ENCODE measurements at regions of chr3 and their contacts with region 1.

Region 1: DNA sequence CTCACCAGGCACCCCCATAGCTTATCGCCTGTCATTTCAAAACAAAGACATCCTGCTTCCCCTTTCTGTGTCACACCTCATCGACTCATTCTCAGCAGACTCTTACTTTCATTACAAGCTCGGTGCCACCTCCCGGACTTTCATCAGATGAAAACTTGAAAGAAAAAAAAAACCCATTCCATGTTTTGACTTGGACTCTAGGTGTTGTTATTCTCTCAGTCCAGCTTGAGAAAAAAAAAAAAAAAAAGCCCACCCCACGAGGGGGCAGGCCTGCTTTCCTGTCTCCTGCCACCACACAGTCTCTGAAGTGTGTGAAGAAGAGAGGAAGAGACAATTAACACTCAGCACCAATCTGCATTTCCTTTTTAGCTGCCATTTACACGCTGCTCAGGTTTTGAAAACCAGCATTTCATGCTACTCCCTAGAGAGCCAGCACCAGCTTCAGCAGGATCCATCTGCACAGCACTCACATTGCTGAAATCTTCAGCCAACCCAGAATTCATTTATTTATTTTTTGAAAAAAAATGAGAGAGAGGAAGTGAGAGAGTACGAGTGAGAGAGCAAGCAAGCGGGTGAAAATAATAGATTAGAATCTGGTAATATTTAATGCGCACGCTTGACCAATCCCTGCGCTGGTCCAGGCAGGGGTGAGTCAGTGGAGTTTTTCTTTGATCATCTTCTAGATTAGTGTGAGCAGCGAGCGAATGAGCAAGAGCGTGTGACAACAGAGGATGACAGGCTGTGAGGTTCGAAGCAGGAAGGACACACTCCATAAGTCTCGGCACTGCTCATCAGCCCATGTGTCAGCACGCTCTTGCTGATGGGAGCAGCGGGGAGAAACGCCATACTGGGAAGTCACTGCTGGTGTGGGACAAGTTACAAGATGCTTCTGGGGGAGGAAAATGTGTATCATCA is 23.5 kb downstream of the ZNF80 start:
- DNase-seq: peak; percentile 88
- ATAC-seq: peak; percentile 68
- H3K4me3 Mint-ChIP-seq: no peak overlapping the region
- H3K27ac Mint-ChIP-seq: no peak overlapping the region
- H3K4me1 Mint-ChIP-seq: peaks cover 21% of the 10 kb centered on the region
- H3K27me3 Mint-ChIP-seq: no peaks in the 10 kb centered on the region
- CTCF ChIP-seq: no peak

Region 2: DNA sequence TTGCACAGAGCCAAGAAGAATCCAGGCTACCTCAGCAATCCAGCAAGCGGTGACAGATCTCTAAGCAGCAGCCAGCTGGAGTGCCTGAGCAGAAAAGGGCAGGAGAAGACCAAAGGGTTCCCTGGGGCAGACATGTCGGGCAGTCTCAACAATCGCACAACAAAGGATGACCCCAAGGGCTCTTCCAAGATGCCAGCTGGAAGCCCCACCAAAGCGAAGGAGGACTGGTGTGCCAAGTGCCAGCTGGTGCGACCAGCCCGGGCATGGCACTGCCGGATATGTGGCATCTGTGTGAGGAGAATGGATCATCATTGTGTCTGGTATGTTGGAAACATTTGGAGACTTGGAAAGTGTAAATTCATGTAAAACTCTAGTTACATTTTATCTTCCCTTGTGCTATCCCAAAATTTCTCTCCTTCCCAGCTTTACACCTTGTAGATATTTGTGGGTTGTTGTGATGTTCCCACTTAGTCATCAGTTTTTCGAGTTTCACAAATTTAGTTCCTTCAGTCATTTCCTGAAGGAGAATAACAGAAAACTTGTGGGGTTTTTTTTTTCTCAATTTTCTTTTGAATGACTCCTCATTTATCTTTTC is 259.7 kb before region 1 on chr3:
- CTCF ChIA-PET with region 1: no interaction called
- POLR2A ChIA-PET with region 1: no interaction called
- intact Hi-C with region 1: no loop called
- DNase-seq: no peak
- ATAC-seq: no peak
- H3K4me3 Mint-ChIP-seq: no peak overlapping the region
- H3K27ac Mint-ChIP-seq: no peak overlapping the region
- H3K4me1 Mint-ChIP-seq: peaks cover 13% of the 10 kb centered on the region
- H3K27me3 Mint-ChIP-seq: peaks cover 4% of the 10 kb centered on the region
- CTCF ChIP-seq: no peak

Region 3: GRCh38 chr3:114152519-114153151 is 61.2 kb before region 1 on chr3:
- CTCF ChIA-PET with region 1: interaction called, 10 read pairs
- POLR2A ChIA-PET with region 1: interaction called, 4 read pairs
- intact Hi-C with region 1: loop called (anchors 5 kb)
- DNase-seq: peak; percentile 92
- ATAC-seq: peak; percentile 99
- H3K4me3 Mint-ChIP-seq: peak overlapping the region; percentile 22
- H3K27ac Mint-ChIP-seq: no peak overlapping the region
- H3K4me1 Mint-ChIP-seq: peaks cover 13% of the 10 kb centered on the region
- H3K27me3 Mint-ChIP-seq: no peaks in the 10 kb centered on the region
- CTCF ChIP-seq: peak; percentile 95

Region 4: DNA sequence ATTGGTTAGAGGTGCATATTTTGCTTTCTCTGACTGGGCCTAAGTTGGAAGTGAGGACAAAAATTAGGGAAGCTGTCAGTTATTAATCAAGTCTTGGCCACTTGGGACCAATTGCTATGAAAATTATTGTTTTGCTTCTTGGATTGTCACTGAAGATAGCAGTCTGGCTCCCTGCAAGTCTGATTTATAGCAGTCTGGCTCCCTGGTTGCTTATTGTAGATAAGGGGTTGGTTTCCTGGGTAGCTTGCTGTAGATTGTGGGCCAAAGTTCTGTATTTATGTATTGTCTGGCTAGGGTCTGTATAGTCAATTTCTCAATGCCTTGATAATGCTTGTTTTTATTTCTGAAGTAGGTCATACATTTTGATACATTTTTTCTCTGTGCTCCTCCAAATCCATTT is 21.7 kb before region 1 on chr3:
- CTCF ChIA-PET with region 1: no interaction called
- POLR2A ChIA-PET with region 1: no interaction called
- intact Hi-C with region 1: no loop called
- DNase-seq: no peak
- ATAC-seq: no peak
- H3K4me3 Mint-ChIP-seq: no peak overlapping the region
- H3K27ac Mint-ChIP-seq: no peak overlapping the region
- H3K4me1 Mint-ChIP-seq: no peaks in the 10 kb centered on the region
- H3K27me3 Mint-ChIP-seq: no peaks in the 10 kb centered on the region
- CTCF ChIP-seq: no peak

Region 5: DNA sequence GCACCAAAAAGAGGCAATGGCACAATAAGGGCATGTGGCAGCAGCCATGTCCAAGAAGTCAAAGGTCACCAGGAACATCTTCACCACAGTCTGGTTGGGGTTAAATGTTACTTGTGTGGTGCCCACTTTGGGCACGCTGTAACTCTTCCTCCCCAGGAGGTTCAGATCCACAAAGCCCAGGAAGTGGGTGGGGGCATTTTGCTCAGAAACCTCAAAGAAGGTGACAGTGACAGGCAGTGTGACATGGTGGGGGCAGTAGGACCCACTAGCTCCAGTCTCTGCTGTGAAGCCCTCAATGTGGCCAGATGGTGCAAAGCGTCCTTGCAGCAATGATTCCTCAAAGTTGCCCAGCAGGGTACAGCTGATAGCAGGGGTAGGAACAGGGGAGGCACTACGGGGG is 17.7 kb after region 1 on chr3:
- CTCF ChIA-PET with region 1: interaction called, 7 read pairs
- POLR2A ChIA-PET with region 1: interaction called, 84 read pairs
- intact Hi-C with region 1: no loop called
- DNase-seq: peak; percentile 80
- ATAC-seq: peak; percentile 73
- H3K4me3 Mint-ChIP-seq: no peak overlapping the region
- H3K27ac Mint-ChIP-seq: peak overlapping the region; percentile 81
- H3K4me1 Mint-ChIP-seq: peaks cover 86% of the 10 kb centered on the region
- H3K27me3 Mint-ChIP-seq: no peaks in the 10 kb centered on the region
- CTCF ChIP-seq: no peak

Region 6: DNA sequence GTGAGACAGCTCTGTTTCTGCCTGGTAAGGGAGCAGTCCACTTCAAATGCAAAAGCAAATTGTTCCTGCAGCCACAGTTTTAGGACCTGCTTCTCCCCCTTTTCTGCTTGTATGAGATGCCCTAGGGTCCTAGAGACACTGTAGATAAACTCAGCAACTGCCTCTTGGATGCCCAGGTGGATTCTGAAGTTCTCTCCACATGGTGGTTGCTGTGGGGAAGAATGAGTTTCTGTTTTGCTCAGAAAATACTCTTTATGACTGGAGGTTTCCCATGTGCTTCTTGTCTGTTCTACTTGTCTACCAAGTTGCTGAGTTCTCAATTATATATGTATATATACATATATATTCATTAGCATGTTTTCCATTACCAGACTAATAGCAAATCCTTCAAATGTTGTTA is 29.1 kb after region 1 on chr3:
- CTCF ChIA-PET with region 1: no interaction called
- POLR2A ChIA-PET with region 1: interaction called, 3 read pairs
- intact Hi-C with region 1: loop called (anchors 1 kb)
- DNase-seq: peak; percentile 58
- ATAC-seq: peak; percentile 77
- H3K4me3 Mint-ChIP-seq: no peak overlapping the region
- H3K27ac Mint-ChIP-seq: peak overlapping the region; percentile 29
- H3K4me1 Mint-ChIP-seq: peaks cover 23% of the 10 kb centered on the region
- H3K27me3 Mint-ChIP-seq: no peaks in the 10 kb centered on the region
- CTCF ChIP-seq: no peak

Region 7: GRCh38 chr3:114319453-114319852 is 105.6 kb after region 1 on chr3:
- CTCF ChIA-PET with region 1: interaction called, 3 read pairs
- POLR2A ChIA-PET with region 1: interaction called, 15 read pairs
- intact Hi-C with region 1: no loop called
- DNase-seq: no peak
- ATAC-seq: no peak
- H3K4me3 Mint-ChIP-seq: peak overlapping the region; percentile 7
- H3K27ac Mint-ChIP-seq: peak overlapping the region; percentile 85
- H3K4me1 Mint-ChIP-seq: peaks cover 87% of the 10 kb centered on the region
- H3K27me3 Mint-ChIP-seq: no peaks in the 10 kb centered on the region
- CTCF ChIP-seq: no peak